Panc1 (cell line): ENCODE measurements at regions of chr1 and their contacts with region 1.

Region 1: GRCh38 chr1:7562729-7563605 is 208.1 kb upstream of the VAMP3 start:
- DNase-seq: no peak
- ATAC-seq: no peak
- H3K4me3 ChIP-seq: no peak overlapping the region
- H3K27ac ChIP-seq: no peak overlapping the region
- H3K4me1 ChIP-seq: no peaks in the 10 kb centered on the region
- H3K27me3 ChIP-seq: no peaks in the 10 kb centered on the region
- CTCF ChIP-seq: no peak

Region 2: DNA sequence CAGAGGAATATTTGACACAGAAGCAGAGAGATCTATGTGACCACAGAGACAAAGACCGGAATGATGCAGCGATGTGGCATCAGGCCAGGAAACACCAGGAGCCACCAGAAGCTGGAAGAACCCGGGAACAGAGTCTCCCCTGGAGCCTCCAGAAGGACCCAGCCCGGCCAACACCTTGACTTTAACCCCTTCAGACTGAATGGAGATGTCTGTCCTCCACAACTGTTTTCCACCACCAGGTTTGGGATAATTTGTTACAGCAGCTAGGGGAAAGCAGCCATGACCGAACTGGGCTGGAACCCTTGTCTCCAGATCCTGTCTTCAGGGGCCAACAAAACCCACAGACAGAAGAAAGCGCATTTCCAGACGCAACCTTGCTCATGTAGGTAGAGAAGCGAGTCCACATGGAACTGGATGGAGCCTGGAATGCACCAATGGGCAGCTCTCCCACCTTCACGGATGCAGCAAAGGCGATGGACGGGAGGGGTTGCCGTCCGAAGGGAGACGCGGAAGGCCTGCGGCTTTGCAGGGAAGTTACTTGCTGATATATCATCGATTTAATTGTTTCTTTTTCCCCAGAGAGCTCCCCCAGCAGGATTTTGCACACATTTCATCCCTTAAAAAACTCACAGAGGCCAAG is 1967.3 kb before region 1 on chr1:
- CTCF ChIA-PET with region 1: no interaction called
- POLR2A ChIA-PET with region 1: no interaction called
- in situ Hi-C with region 1: no loop called
- intact Hi-C with region 1: no loop called
- DNase-seq: no peak
- ATAC-seq: no peak
- H3K4me3 ChIP-seq: no peak overlapping the region
- H3K27ac ChIP-seq: no peak overlapping the region
- H3K4me1 ChIP-seq: no peaks in the 10 kb centered on the region
- H3K27me3 ChIP-seq: no peaks in the 10 kb centered on the region; the same call in 1 of the 2 replicates
- CTCF ChIP-seq: no peak

Region 3: GRCh38 chr1:7529917-7530316 is 33.0 kb before region 1 on chr1:
- CTCF ChIA-PET with region 1: no interaction called
- POLR2A ChIA-PET with region 1: interaction called, 10 read pairs
- in situ Hi-C with region 1: no loop called
- intact Hi-C with region 1: no loop called
- DNase-seq: no peak
- ATAC-seq: no peak
- H3K4me3 ChIP-seq: no peak overlapping the region
- H3K27ac ChIP-seq: no peak overlapping the region
- H3K4me1 ChIP-seq: no peaks in the 10 kb centered on the region
- H3K27me3 ChIP-seq: no peaks in the 10 kb centered on the region
- CTCF ChIP-seq: no peak